Lower leg skin (tissue), 4 donors: ENCODE measurements at regions of chr5 and their contacts with region 1.

Region 1: GRCh38 chr5:167155387-167156055 is 1135.9 kb upstream of the WWC1 start:
- DNase-seq: no peak
- H3K4me3 ChIP-seq: no peak overlapping the region
- CTCF ChIP-seq: no peak
- POLR2A ChIP-seq: no peak

Region 2: GRCh38 chr5:165277661-165278060 is 1877.9 kb before region 1 on chr5:
- intact Hi-C with region 1: loop called (anchors 5 kb)
- DNase-seq: no peak
- H3K4me3 ChIP-seq: no peak overlapping the region
- CTCF ChIP-seq: no peak
- POLR2A ChIP-seq: no peak

Region 3: DNA sequence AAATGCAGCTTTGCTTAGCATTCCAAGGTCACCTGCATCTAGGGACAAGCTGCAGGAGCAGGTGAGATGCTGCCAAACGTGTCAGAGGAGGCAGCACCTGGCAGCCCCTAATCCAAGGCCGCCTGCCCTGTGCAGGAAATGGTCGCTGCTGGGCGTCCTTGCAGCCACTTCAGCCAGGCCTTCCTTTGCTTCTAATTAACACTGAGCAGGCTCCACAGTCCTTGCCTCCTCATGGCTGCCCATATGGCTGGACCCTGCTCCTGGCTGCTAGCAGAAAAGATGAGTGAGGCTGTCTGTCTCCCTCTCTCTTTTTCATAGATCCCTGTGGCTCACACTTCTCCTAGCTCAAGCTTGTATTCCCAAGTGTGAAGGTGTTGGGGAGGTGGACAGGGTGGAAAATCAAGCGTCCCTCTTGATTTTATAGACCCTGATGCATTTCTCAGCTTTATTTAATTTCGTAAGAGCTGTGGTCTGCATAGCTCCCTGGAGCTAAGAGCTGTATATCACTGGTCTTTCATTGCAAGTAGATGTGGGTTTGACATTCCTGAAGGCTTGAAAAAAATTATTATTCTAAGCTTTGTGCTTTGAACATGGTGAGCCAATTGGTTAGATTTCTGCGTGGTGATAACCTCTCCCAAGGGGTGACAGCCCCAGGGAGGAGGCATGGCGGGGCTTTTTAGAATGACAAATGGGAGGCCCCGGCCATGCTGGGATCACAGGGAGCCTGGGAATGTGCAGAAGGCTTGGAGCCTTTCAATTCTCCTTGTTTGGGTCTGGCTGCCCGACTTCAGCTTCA is 1951.6 kb after region 1 on chr5:
- intact Hi-C with region 1: no loop called
- DNase-seq: peak in 1 of 2 donors; percentile 76
- H3K4me3 ChIP-seq: no peak overlapping the region
- CTCF ChIP-seq: no peak
- POLR2A ChIP-seq: no peak